Spleen (tissue), 13 donors: ENCODE measurements at regions of chr6 and their contacts with region 1.

Region 1: DNA sequence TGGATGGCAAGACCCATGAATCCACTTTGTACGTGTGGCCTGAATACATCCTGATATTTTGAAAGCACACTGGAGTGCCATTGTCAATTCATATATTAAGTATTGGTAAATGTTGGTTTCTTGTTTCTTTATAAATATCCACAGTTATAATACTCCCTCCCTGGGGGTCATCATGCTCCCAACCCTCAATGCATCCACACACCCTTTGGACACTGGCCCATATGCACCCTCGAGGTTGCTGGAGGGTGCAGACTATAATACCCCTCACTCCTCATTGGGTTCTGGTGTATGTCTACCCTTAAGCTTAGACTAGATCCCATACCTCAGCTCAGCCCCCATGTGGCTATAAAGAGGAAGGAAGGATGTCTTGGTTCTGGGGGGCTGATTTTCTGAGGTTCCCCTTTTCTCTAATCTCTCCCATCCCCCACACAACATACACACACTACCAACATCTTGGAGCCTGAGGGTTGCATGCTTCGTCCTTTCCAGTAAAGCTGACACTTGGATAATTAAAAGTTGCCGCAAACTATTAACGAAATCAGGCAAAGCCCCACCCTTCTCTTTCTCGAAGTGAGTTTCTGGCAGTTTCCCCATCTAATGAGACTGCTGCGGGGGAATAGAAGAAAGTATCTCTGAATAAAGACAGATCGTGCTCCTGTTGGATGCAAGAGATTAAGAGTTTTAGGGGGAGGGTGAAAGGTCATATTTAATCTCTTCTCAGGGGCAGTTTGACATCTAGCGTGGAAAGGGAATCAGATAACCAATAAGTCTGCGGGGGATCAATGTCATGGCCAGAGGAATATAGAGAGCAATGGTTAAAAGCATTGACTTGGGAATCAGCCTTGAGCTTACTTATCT is 7.4 kb downstream of the PIM1 start:
- DNase-seq: no peak
- H3K4me3 ChIP-seq: peak overlapping the region in 1 of 8 donors; percentile 16
- H3K27ac ChIP-seq: peak overlapping the region in 7 of 8 donors; percentile 3 to 96 (median 46)
- H3K4me1 ChIP-seq: peaks cover 46 to 95% (median 71%) of the 10 kb centered on the region in 6 donors
- H3K27me3 ChIP-seq: no peaks in the 10 kb centered on the region
- CTCF ChIP-seq: peak in 6 of 11 experiments; percentile 14 to 46 (median 24)
- POLR2A ChIP-seq: no peak

Region 2: GRCh38 chr6:37033255-37033654 is 144.1 kb before region 1 on chr6:
- intact Hi-C with region 1: loop called (anchors 5 kb)
- DNase-seq: no peak
- H3K4me3 ChIP-seq: no peak overlapping the region
- H3K27ac ChIP-seq: peak overlapping the region in 2 of 8 donors; percentile 31 to 46
- H3K4me1 ChIP-seq: peaks cover 0 to 35% (median 13%) of the 10 kb centered on the region in 6 donors
- H3K27me3 ChIP-seq: no peaks in the 10 kb centered on the region
- CTCF ChIP-seq: no peak
- POLR2A ChIP-seq: no peak

Region 3: GRCh38 chr6:37092923-37093920 is 84.1 kb before region 1 on chr6:
- intact Hi-C with region 1: no loop called
- DNase-seq: no peak
- H3K4me3 ChIP-seq: no peak overlapping the region
- H3K27ac ChIP-seq: no peak overlapping the region
- H3K4me1 ChIP-seq: peaks cover 0 to 29% (median 8%) of the 10 kb centered on the region in 6 donors
- H3K27me3 ChIP-seq: no peaks in the 10 kb centered on the region
- CTCF ChIP-seq: no peak
- POLR2A ChIP-seq: no peak

Region 4: GRCh38 chr6:37141281-37142049 is 35.8 kb before region 1 on chr6:
- intact Hi-C with region 1: no loop called
- DNase-seq: no peak
- H3K4me3 ChIP-seq: no peak overlapping the region
- H3K27ac ChIP-seq: peak overlapping the region in 4 of 8 donors; percentile 13 to 61 (median 46)
- H3K4me1 ChIP-seq: peaks cover 0 to 33% (median 8%) of the 10 kb centered on the region in 6 donors
- H3K27me3 ChIP-seq: no peaks in the 10 kb centered on the region
- CTCF ChIP-seq: no peak
- POLR2A ChIP-seq: no peak

Region 5: GRCh38 chr6:37222125-37222967 is 45.0 kb after region 1 on chr6:
- intact Hi-C with region 1: no loop called
- DNase-seq: peak; percentile 91
- H3K4me3 ChIP-seq: peak overlapping the region; percentile 67 to 98 (median 86)
- H3K27ac ChIP-seq: peak overlapping the region in 7 of 8 donors; percentile 20 to 72 (median 55)
- H3K4me1 ChIP-seq: peaks cover 5 to 47% (median 20%) of the 10 kb centered on the region in 6 donors
- H3K27me3 ChIP-seq: no peaks in the 10 kb centered on the region
- CTCF ChIP-seq: no peak
- POLR2A ChIP-seq: no peak

Region 6: DNA sequence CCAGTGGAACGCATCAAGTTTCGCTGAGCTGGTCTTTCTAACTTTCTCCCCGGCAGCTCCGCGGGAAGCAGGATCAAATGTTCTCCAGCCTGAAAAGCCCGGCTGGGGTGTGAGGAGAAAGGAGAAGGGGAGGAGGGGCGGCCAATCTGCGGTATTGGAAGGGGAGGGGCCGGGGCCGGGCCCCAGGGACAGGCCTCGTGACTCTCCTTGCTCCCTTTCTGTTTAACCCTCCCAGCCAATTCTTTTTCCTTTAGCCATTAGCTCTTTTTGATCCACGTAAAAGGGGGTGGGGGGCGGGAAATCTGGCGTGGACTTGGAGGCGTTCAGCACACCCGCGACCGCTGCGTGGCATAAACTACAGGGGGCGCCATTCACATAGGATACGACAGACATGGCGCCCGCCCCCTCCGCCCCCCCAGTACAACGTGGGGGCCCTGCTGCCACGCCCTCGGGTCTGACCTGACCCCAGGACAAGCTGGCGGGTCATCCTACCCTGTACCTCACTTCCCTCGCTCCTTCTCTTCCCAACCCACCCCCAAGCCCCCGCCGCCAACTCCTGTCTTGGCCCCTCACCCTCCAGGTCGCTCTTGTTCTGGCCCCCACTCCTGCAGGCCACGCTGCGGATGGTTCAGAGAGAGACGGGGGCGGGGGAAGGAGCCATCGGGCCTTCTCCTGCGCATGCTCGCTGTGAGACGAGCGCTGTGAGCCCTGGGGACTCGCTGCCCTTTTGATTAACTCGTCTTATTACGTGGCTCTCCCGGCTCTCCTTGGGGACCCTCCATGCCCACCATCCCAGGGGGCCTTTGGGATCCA is 528.1 kb after region 1 on chr6:
- intact Hi-C with region 1: no loop called
- DNase-seq: peak; percentile 90
- H3K4me3 ChIP-seq: peak overlapping the region; percentile 41 to 78 (median 44)
- H3K27ac ChIP-seq: peak overlapping the region; percentile 20 to 82 (median 62)
- H3K4me1 ChIP-seq: peaks cover 5 to 31% (median 12%) of the 10 kb centered on the region in 6 donors
- H3K27me3 ChIP-seq: peaks cover 0 to 15% (median 0%) of the 10 kb centered on the region in 7 donors
- CTCF ChIP-seq: peak; percentile 35 to 79 (median 55)
- POLR2A ChIP-seq: no peak